A673 (cell line): ENCODE measurements at regions of chr18 and their contacts with region 1.

Region 1: DNA sequence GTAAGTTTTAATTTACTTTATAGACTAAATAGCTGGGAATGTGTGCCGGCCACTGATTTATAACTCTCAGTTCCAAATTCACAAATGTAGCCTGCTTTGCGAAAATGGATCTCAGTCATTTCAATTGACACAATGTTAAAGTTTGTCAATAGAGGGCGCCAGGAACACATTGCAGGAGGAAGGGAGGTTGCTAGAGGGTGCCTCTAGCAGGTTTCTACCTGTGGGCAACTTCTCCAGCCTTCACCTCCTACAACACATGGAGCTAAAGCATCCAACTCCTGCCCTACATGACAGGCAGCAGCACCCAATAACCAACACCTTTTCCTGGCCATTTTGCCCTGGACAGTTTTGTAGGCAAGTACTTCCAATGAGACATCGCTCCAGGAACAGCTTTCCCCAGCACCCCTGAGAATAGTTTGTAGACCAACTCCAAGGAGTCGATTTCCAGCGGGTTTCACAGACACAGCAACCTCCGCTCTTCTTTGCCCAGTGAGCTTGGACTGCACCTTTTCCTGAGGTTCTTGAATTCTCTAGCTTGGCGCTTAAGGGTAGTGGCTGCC is 784.8 kb upstream of the CDH2 start:
- DNase-seq: peak; percentile 72
- H3K4me3 ChIP-seq: no peak overlapping the region
- H3K27ac ChIP-seq: no peak overlapping the region
- H3K4me1 ChIP-seq: no peaks in the 10 kb centered on the region
- H3K27me3 ChIP-seq: no peaks in the 10 kb centered on the region
- CTCF ChIP-seq: peak; percentile 75

Region 2: DNA sequence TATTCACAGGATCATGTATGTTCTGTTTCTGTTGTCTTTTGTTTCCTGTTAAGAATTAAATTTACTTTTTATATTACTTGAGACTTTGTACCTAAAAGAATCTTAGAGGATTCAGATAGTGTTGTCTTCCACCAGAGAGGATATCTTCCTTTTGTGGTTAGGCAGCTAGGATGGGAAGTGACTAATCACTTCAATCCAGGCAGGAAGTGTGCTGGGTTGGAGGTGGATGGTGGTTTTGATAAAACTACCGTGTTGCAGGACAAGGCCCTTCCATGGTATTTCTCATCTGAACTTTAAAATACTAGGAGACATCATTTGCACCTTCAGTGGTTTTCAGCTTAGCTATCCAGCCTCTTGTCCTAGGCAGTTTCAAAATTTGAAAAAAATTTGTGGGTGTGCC is 56.2 kb before region 1 on chr18:
- CTCF ChIA-PET with region 1: no interaction called
- POLR2A ChIA-PET with region 1: no interaction called
- intact Hi-C with region 1: no loop called
- DNase-seq: peak; percentile 46
- H3K4me3 ChIP-seq: no peak overlapping the region
- H3K27ac ChIP-seq: no peak overlapping the region
- H3K4me1 ChIP-seq: no peaks in the 10 kb centered on the region
- H3K27me3 ChIP-seq: no peaks in the 10 kb centered on the region
- CTCF ChIP-seq: no peak

Region 3: DNA sequence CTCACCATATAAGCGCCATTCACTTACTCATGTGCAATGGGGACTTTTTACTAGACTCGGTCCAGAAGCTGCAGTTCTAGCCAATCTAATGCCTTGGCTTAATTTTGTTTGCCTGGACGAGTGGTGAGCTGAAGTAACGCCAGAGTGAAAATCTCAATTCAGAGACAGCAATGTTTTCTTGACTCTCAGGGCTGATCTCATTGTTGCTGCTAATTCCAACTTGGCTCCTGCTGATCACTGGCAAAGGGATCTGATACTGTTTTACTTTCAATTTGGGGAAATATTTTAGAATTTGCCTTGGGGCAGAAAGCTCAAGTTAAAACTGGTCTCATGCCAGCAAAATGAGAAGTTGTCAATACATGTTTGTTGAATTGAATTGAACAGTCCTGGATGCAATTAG is 121.8 kb after region 1 on chr18:
- CTCF ChIA-PET with region 1: no interaction called
- POLR2A ChIA-PET with region 1: no interaction called
- intact Hi-C with region 1: no loop called
- DNase-seq: peak; percentile 33
- H3K4me3 ChIP-seq: no peak overlapping the region
- H3K27ac ChIP-seq: no peak overlapping the region
- H3K4me1 ChIP-seq: no peaks in the 10 kb centered on the region
- H3K27me3 ChIP-seq: no peaks in the 10 kb centered on the region
- CTCF ChIP-seq: no peak

Region 4: DNA sequence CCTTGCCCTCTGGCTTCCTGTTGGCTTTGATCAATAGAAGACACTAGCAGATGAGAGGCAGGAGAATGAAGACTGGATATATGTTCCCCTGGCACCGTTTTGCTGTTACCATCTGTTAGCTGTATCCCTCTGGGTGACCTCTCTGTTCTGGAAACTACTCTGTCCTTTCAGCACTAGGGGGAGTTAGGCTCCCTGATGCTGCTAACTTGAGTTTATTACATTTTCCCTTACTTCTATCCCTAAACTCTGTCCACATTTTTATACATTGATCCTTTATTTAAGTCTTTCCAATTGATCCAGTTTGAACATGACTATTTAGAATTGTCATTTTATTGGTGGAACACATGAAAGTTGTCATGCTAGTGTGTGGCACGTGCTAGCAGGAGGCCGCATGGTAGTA is 229.5 kb after region 1 on chr18:
- CTCF ChIA-PET with region 1: no interaction called
- POLR2A ChIA-PET with region 1: no interaction called
- intact Hi-C with region 1: loop called (anchors 10 kb)
- DNase-seq: peak; percentile 30
- H3K4me3 ChIP-seq: no peak overlapping the region
- H3K27ac ChIP-seq: no peak overlapping the region
- H3K4me1 ChIP-seq: no peaks in the 10 kb centered on the region
- H3K27me3 ChIP-seq: no peaks in the 10 kb centered on the region
- CTCF ChIP-seq: peak; percentile 56